A673 (cell line): ENCODE measurements at regions of chr6 and their contacts with region 1.

Region 1: DNA sequence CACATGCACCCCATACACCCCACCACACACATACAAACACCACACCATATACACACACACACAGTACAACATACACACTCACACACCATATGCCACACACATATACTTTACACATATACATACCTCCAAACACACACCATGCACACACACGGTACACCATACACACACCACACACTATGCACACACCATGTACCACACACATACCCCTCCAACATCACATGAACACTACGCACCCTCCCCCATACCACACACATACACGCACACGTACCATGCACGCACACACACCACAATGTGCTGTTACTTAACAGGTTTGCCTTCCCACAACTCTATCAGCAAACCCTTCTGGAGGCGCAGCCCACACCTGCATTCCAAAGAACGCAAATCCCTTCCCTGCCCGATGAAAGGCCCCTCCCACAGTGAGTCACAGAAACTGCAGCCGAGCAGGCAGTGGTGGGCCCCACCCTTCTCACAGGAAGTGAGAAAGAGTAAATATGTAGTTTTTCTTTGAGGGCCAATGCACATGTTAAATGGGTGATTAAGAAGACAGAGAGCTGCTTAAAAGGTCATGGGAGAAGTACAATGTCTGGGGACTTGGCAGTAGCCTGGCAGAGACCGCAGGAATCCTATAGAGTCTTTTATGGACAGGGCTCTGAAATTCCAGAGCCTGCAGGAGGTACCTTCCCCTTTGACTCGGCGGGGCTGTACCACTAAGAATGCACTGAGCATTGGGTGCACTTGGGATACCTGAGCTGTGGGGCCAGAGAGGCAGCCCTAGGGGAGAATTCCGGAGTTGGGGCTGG is 34.1 kb upstream of the EZR start:
- DNase-seq: peak; percentile 90
- H3K4me3 ChIP-seq: no peak overlapping the region
- H3K27ac ChIP-seq: peak overlapping the region; percentile 73
- H3K4me1 ChIP-seq: peaks cover 36% of the 10 kb centered on the region
- H3K27me3 ChIP-seq: no peaks in the 10 kb centered on the region
- CTCF ChIP-seq: no peak

Region 2: GRCh38 chr6:158718461-158719046 is 134.7 kb before region 1 on chr6:
- CTCF ChIA-PET with region 1: interaction called, 10 read pairs
- POLR2A ChIA-PET with region 1: no interaction called
- intact Hi-C with region 1: no loop called
- DNase-seq: peak; percentile 46
- H3K4me3 ChIP-seq: no peak overlapping the region
- H3K27ac ChIP-seq: no peak overlapping the region
- H3K4me1 ChIP-seq: no peaks in the 10 kb centered on the region
- H3K27me3 ChIP-seq: no peaks in the 10 kb centered on the region
- CTCF ChIP-seq: peak; percentile 91